ENCODE measurements at regions of chr1 and their contacts with region 1.

Region 1: GRCh38 chr1:32817159-32817814 is at the starts of genes S100PBP and YARS1:
- DNase-seq: peak; percentile 98 to 100 (median 100)
- ATAC-seq: peak; percentile 95
- H3K4me3 ChIP-seq: peak within 1 kb of the TSS; percentile 86 to 98
- H3K4me3 Mint-ChIP-seq: peak within 1 kb of the TSS; percentile 96
- H3K27ac ChIP-seq: peak within 1 kb of the TSS; percentile 76 to 84
- H3K27ac Mint-ChIP-seq: peak within 1 kb of the TSS; percentile 90
- H3K4me1 ChIP-seq: peaks cover 34% of the 10 kb centered on the region
- H3K4me1 Mint-ChIP-seq: peaks cover 63% of the 10 kb centered on the region
- H3K27me3 ChIP-seq: no peaks in the 10 kb centered on the region
- H3K27me3 Mint-ChIP-seq: no peaks in the 10 kb centered on the region
- CTCF ChIP-seq: no peak
- total RNA-seq, gene S100PBP: 21.2 to 26.6 TPM
- total RNA-seq, gene YARS1: 105 to 114 TPM

Region 2: GRCh38 chr1:32107742-32108661 is 709.3 kb before region 1 on chr1 and contains the start of gene KPNA6:
- CTCF ChIA-PET with region 1: no interaction called
- POLR2A ChIA-PET with region 1: no interaction called
- intact Hi-C with region 1: loop called in 1 of 2 experiments (anchors 2 kb)
- DNase-seq: peak; percentile 83 to 98 (median 90)
- ATAC-seq: peak; percentile 89
- H3K4me3 ChIP-seq: peak within 1 kb of the TSS; percentile 87 to 95
- H3K4me3 Mint-ChIP-seq: peak within 1 kb of the TSS; percentile 98
- H3K27ac ChIP-seq: peak within 1 kb of the TSS; percentile 84 to 93
- H3K27ac Mint-ChIP-seq: peak within 1 kb of the TSS; percentile 98
- H3K4me1 ChIP-seq: peaks cover 45% of the 10 kb centered on the region
- H3K4me1 Mint-ChIP-seq: peaks cover 50% of the 10 kb centered on the region
- H3K27me3 ChIP-seq: no peaks in the 10 kb centered on the region
- H3K27me3 Mint-ChIP-seq: no peaks in the 10 kb centered on the region
- CTCF ChIP-seq: no peak
- total RNA-seq, gene KPNA6: 51.7 to 58.7 TPM

Region 3: DNA sequence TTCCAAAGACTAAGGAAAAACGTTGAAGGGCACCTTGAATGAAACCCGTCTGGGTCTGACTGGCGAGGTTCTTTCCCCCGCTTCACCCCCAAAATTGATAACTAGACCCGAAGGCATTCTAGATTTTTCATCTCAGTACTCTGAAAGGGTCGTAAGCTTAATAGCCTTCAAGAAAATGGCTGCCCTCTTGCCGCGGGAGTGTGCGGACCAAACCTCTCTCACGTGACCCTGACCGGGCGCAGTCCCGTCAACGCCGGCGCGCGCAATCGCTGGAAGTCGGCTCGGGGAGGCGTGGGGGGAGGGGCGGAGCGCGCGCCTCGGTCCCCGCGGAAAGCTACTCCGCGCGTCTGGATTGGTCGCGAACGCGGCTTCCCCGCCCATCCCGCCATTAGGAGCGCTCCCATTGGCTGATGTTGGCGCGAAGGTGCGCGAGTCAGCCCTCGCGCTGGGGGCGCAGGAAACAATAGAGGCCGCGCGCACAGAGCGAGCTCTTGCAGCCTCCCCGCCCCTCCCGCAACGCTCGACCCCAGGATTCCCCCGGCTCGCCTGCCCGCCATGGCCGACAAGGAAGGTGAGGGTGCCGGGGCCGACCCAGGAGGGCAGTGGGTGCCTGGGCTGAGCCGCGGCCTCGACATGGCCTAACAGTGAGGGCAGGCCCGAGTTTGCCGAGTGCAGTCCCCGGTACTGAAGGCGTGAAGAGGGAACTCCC is 166.4 kb before region 1 on chr1 and contains the start of gene RBBP4:
- CTCF ChIA-PET with region 1: no interaction called
- POLR2A ChIA-PET with region 1: interaction called, 5 read pairs
- intact Hi-C with region 1: loop called (anchors 1 kb)
- DNase-seq: peak; percentile 96 to 100 (median 99)
- ATAC-seq: peak; percentile 83
- H3K4me3 ChIP-seq: peak within 1 kb of the TSS; percentile 82 to 97
- H3K4me3 Mint-ChIP-seq: peak within 1 kb of the TSS; percentile 93
- H3K27ac ChIP-seq: peak within 1 kb of the TSS; percentile 98 to 99
- H3K27ac Mint-ChIP-seq: peak within 1 kb of the TSS; percentile 99
- H3K4me1 ChIP-seq: peaks cover 51% of the 10 kb centered on the region
- H3K4me1 Mint-ChIP-seq: peaks cover 60% of the 10 kb centered on the region
- H3K27me3 ChIP-seq: no peaks in the 10 kb centered on the region
- H3K27me3 Mint-ChIP-seq: no peaks in the 10 kb centered on the region
- CTCF ChIP-seq: no peak
- total RNA-seq, gene RBBP4: 109 to 121 TPM

Region 4: DNA sequence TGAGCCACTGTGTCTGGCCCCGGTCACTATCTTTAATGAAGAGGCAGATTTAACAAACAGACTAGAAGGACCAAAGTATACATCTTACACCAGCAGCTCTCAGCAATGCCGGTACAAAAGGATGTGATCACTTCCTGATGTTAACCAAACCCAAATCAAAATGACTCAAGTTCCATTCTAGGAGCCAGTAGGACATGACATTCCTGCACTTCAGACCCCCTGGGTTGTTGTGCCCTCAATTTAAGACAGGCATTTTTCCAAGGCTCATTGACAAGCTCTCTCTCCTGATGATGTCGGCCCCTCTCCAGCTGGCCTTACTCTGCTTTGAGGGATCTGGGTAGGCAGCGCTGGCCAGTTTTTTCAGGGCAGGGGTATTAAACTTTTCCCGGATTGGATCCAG is 35.2 kb before region 1 on chr1:
- CTCF ChIA-PET with region 1: no interaction called
- POLR2A ChIA-PET with region 1: no interaction called
- intact Hi-C with region 1: loop called in 1 of 2 experiments (anchors 5 kb)
- DNase-seq: no peak
- ATAC-seq: no peak
- H3K4me3 ChIP-seq: no peak overlapping the region
- H3K4me3 Mint-ChIP-seq: no peak overlapping the region
- H3K27ac ChIP-seq: no peak overlapping the region
- H3K27ac Mint-ChIP-seq: no peak overlapping the region
- H3K4me1 ChIP-seq: no peaks in the 10 kb centered on the region
- H3K4me1 Mint-ChIP-seq: no peaks in the 10 kb centered on the region
- H3K27me3 ChIP-seq: no peaks in the 10 kb centered on the region
- H3K27me3 Mint-ChIP-seq: no peaks in the 10 kb centered on the region
- CTCF ChIP-seq: no peak

Region 5: DNA sequence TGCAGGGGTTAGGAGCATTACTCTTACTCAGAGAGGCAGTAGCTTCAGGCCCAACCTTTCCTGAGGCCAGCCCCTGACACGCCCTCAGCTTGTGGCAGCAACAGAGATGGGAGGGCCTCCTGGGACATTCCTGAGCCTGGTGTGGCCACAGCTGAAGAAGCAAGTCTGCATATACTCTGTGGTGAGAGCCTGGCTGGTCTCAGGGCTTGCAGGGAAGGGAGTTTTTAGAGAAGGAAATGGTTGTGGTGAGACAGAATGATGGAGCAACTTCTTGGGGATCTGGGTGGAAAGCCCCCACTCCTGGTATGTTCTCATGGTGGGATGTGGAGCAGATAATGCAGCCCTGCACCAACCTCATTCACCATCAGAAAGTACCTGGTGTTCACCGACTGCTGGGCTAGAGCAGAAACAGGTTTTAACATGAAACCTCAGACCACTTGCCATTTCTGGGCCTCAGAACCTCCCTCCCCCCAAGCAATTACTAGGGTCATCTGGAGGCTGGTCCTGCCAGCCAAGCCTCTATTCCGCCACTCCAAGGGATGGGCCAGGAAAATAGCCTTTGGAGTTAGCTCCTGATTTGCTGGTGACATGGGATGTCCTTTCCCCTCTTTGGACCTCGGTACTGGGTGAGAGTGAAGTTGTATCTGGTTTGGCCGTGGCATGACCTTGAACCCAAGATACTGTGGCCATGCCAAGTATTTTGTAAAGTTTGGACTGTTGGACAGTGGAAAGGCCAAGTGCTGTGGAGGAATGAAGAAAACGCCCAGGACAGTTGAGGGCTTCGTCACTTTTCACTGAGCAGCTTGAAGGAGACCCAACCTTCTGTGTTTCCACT is 175.4 kb after region 1 on chr1:
- CTCF ChIA-PET with region 1: no interaction called
- POLR2A ChIA-PET with region 1: no interaction called
- intact Hi-C with region 1: no loop called
- DNase-seq: peak in 5 of 9 experiments; percentile 9 to 68 (median 43)
- ATAC-seq: peak; percentile 70
- H3K4me3 ChIP-seq: no peak overlapping the region
- H3K4me3 Mint-ChIP-seq: no peak overlapping the region
- H3K27ac ChIP-seq: peak overlapping the region in 1 of 2 experiments; percentile 14
- H3K27ac Mint-ChIP-seq: no peak overlapping the region
- H3K4me1 ChIP-seq: peaks cover 5% of the 10 kb centered on the region
- H3K4me1 Mint-ChIP-seq: peaks cover 12% of the 10 kb centered on the region
- H3K27me3 ChIP-seq: no peaks in the 10 kb centered on the region
- H3K27me3 Mint-ChIP-seq: no peaks in the 10 kb centered on the region
- CTCF ChIP-seq: no peak

Region 6: DNA sequence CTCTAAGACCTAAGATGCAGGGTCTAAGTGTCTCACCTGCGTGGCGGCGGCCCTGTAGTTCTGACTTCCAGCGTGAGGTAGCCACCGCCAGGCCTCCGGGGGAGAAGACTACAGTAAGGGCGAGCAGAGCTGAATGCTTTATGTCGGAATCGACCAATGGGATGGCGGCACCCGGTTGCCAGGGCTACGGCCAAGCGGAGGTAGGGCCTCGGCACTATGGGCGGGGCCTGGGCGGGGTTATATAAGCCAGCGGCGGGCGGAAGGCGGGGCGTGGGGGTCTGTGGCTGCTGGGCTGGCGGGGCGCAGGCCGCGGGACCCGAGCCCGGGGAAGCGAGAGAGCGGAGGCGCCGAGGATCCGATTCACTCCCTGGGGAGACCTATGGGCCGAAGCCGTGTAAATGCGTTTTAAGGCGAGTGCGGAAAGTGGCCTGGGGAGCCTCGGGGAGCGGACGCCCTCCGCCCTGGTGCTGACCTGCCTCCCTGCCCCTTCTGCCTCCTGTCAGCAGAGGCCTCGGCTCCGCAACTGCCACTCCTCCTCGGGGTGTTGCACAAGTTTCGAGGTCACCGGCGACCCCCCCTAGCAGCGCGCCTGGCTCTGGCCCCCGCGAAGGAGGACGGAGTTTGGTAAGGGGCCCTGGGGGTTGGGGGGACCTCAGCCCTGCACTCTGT is 263.7 kb after region 1 on chr1 and contains the start of gene AZIN2:
- CTCF ChIA-PET with region 1: no interaction called
- POLR2A ChIA-PET with region 1: no interaction called
- intact Hi-C with region 1: loop called (anchors 1 to 5 kb)
- DNase-seq: peak; percentile 92 to 100 (median 97)
- ATAC-seq: peak; percentile 99
- H3K4me3 ChIP-seq: peak within 1 kb of the TSS; percentile 57 to 89
- H3K4me3 Mint-ChIP-seq: peak within 1 kb of the TSS; percentile 82
- H3K27ac ChIP-seq: peak within 1 kb of the TSS; percentile 28 to 54
- H3K27ac Mint-ChIP-seq: peak within 1 kb of the TSS; percentile 82
- H3K4me1 ChIP-seq: peaks cover 22% of the 10 kb centered on the region
- H3K4me1 Mint-ChIP-seq: peaks cover 29% of the 10 kb centered on the region
- H3K27me3 ChIP-seq: peaks cover 0 to 2% of the 10 kb centered on the region in 2 experiments
- H3K27me3 Mint-ChIP-seq: no peaks in the 10 kb centered on the region
- CTCF ChIP-seq: no peak
- total RNA-seq, gene AZIN2: 3.5 to 4.1 TPM